B cell (primary cell): ENCODE measurements at regions of chr15 and their contacts with region 1.

Region 1: GRCh38 chr15:43776718-43777583 is at the start of gene ELL3:
- DNase-seq: peak; percentile 91
- ATAC-seq: peak; percentile 62
- H3K4me3 ChIP-seq: peak within 1 kb of the TSS; percentile 78 to 93 (median 88)
- H3K4me3 Mint-ChIP-seq: peak within 1 kb of the TSS; percentile 96
- H3K27ac ChIP-seq: peak within 1 kb of the TSS; percentile 73 to 76
- H3K27ac Mint-ChIP-seq: peak within 1 kb of the TSS; percentile 97
- H3K4me1 ChIP-seq: peaks cover 16 to 30% of the 10 kb centered on the region in 2 donors
- H3K4me1 Mint-ChIP-seq: peaks cover 41% of the 10 kb centered on the region
- H3K27me3 ChIP-seq: no peaks in the 10 kb centered on the region
- H3K27me3 Mint-ChIP-seq: no peaks in the 10 kb centered on the region
- CTCF ChIP-seq: peak; percentile 93
- total RNA-seq, gene ELL3: 88.8 and 90.0 TPM in 2 replicates

Region 2: GRCh38 chr15:43791993-43792760 is 15.2 kb after region 1 on chr15 and contains the start of gene SERF2:
- CTCF ChIA-PET with region 1: interaction called, 150 read pairs
- POLR2A ChIA-PET with region 1: interaction called, 72 read pairs
- intact Hi-C with region 1: loop called (anchors 1 kb)
- DNase-seq: peak; percentile 100
- ATAC-seq: peak; percentile 86
- H3K4me3 ChIP-seq: peak within 1 kb of the TSS; percentile 50 to 100 (median 94)
- H3K4me3 Mint-ChIP-seq: peak within 1 kb of the TSS; percentile 93
- H3K27ac ChIP-seq: peak within 1 kb of the TSS; percentile 96
- H3K27ac Mint-ChIP-seq: peak within 1 kb of the TSS; percentile 93
- H3K4me1 ChIP-seq: peaks cover 37 to 73% of the 10 kb centered on the region in 2 donors
- H3K4me1 Mint-ChIP-seq: peaks cover 66% of the 10 kb centered on the region
- H3K27me3 ChIP-seq: no peaks in the 10 kb centered on the region
- H3K27me3 Mint-ChIP-seq: no peaks in the 10 kb centered on the region
- CTCF ChIP-seq: no peak
- total RNA-seq, gene SERF2: 436 and 455 TPM in 2 replicates

Region 3: GRCh38 chr15:43800286-43801141 is 23.6 kb after region 1 on chr15 and contains the start of gene HYPK:
- CTCF ChIA-PET with region 1: interaction called, 18 read pairs
- POLR2A ChIA-PET with region 1: interaction called, 17 read pairs
- intact Hi-C with region 1: no loop called
- DNase-seq: peak; percentile 92
- ATAC-seq: peak; percentile 98
- H3K4me3 ChIP-seq: peak within 1 kb of the TSS; percentile 85 to 99 (median 90)
- H3K4me3 Mint-ChIP-seq: peak within 1 kb of the TSS; percentile 98
- H3K27ac ChIP-seq: peak within 1 kb of the TSS; percentile 79 to 81
- H3K27ac Mint-ChIP-seq: peak within 1 kb of the TSS; percentile 96
- H3K4me1 ChIP-seq: peaks cover 14 to 27% of the 10 kb centered on the region in 2 donors
- H3K4me1 Mint-ChIP-seq: peaks cover 44% of the 10 kb centered on the region
- H3K27me3 ChIP-seq: no peaks in the 10 kb centered on the region
- H3K27me3 Mint-ChIP-seq: no peaks in the 10 kb centered on the region
- CTCF ChIP-seq: no peak
- total RNA-seq, gene HYPK: 24.0 and 25.7 TPM in 2 replicates

Region 4: DNA sequence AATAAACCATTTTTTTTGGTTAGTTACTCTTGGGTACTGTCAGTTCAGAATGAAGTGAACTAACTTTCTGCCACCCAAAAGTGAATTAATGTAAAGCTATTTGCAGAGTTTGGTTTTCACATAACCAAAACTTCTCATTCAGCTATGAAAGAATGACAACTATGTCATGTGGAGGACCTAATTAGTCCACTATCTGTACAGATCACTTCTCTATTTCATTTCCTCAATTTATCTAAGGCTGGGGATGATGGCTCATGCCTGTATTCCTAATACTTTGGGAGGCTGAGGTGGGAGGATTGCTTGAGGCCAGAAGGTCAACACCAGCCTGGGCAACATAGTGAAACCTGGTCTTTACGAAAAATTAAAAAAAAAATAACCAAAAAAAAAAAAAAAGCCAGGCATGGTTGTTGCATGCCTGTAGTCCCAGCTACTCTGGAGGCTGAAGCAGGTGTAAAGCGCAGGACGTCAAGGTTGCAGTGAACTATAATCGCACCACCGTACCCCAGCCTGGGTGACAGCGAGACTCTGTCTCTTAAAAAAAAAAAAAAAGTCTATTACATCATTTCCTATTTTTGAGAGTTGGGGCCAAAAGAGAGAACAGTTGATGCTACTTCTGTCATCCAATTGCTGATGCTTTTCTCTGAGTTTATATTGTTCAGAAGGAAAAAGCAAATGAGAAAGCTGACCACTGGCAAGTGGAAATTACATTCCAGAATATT is 32.2 kb after region 1 on chr15:
- CTCF ChIA-PET with region 1: interaction called, 16 read pairs
- POLR2A ChIA-PET with region 1: interaction called, 4 read pairs
- intact Hi-C with region 1: loop called (anchors 1 kb)
- DNase-seq: peak; percentile 87
- ATAC-seq: peak; percentile 94
- H3K4me3 ChIP-seq: peak overlapping the region in 1 of 5 experiments; percentile 28
- H3K4me3 Mint-ChIP-seq: peak overlapping the region; percentile 79
- H3K27ac ChIP-seq: peak overlapping the region; percentile 84 to 93
- H3K27ac Mint-ChIP-seq: peak overlapping the region; percentile 95
- H3K4me1 ChIP-seq: peaks cover 28 to 31% of the 10 kb centered on the region in 2 donors
- H3K4me1 Mint-ChIP-seq: peaks cover 25% of the 10 kb centered on the region
- H3K27me3 ChIP-seq: no peaks in the 10 kb centered on the region
- H3K27me3 Mint-ChIP-seq: no peaks in the 10 kb centered on the region
- CTCF ChIP-seq: no peak